ENCODE measurements at regions of chr10 and their contacts with region 1.

Region 1: GRCh38 chr10:19204246-19204917 is 155.8 kb downstream of the MALRD1 start:
- DNase-seq: no peak
- ATAC-seq: no peak
- H3K4me3 ChIP-seq: no peak overlapping the region
- H3K4me3 Mint-ChIP-seq: no peak overlapping the region
- H3K27ac ChIP-seq: no peak overlapping the region
- H3K27ac Mint-ChIP-seq: no peak overlapping the region
- H3K4me1 ChIP-seq: no peaks in the 10 kb centered on the region
- H3K4me1 Mint-ChIP-seq: no peaks in the 10 kb centered on the region
- H3K27me3 ChIP-seq: no peaks in the 10 kb centered on the region
- H3K27me3 Mint-ChIP-seq: no peaks in the 10 kb centered on the region

Region 2: GRCh38 chr10:19629567-19629966 is 425.2 kb after region 1 on chr10:
- CTCF ChIA-PET with region 1: interaction called in 1 of 2 experiments, 10 read pairs
- POLR2A ChIA-PET with region 1: no interaction called
- DNase-seq: no peak
- ATAC-seq: no peak
- H3K4me3 ChIP-seq: no peak overlapping the region
- H3K4me3 Mint-ChIP-seq: no peak overlapping the region
- H3K27ac ChIP-seq: no peak overlapping the region
- H3K27ac Mint-ChIP-seq: no peak overlapping the region
- H3K4me1 ChIP-seq: no peaks in the 10 kb centered on the region
- H3K4me1 Mint-ChIP-seq: no peaks in the 10 kb centered on the region
- H3K27me3 ChIP-seq: no peaks in the 10 kb centered on the region
- H3K27me3 Mint-ChIP-seq: no peaks in the 10 kb centered on the region